ENCODE measurements at regions of chr2 and their contacts with region 1.

Region 1: DNA sequence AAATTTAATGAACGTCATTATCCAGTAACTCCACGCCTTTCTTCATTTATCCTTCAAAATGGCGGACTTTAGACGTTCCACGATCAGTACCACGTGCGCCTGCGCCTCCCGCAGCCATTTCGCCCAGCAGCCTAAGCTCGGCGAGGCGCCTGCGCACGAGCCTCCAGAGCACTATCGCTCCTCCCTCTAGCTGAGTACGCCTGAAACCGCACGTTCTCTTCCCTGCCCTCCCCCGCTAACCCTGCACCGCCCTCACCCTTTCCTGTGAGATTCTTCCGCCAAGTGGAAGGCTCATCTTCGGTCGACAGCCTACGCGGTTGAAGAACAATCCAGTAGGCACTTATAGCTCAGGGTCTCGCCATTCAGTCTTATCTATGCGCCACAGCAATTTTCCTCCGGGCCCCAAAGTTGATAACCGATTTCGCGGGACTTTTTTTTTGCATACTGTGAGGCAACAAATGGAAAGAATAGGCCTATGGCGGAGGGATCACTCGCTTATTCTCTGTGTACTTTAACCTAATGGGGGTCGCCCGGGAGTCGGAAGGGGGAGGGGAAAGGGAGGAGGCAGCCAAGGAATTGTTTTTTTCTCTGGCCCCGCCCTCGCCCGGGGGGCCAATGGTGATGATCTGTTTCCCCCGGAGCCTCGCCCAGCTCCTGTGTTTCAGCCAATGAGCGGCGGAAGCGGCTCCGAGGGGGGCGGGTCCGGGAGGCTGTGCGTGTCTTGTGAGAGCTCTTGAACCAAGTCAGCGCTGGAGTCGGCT is at the start of gene KDM3A:
- DNase-seq: peak; percentile 100
- H3K4me3 Mint-ChIP-seq: peak within 1 kb of the TSS; percentile 93
- H3K27ac Mint-ChIP-seq: peak within 1 kb of the TSS; percentile 98
- H3K4me1 Mint-ChIP-seq: peaks cover 38% of the 10 kb centered on the region
- H3K27me3 Mint-ChIP-seq: peaks cover 6% of the 10 kb centered on the region
- total RNA-seq, gene KDM3A: 74.5 and 78.2 TPM in 2 replicates

Region 2: DNA sequence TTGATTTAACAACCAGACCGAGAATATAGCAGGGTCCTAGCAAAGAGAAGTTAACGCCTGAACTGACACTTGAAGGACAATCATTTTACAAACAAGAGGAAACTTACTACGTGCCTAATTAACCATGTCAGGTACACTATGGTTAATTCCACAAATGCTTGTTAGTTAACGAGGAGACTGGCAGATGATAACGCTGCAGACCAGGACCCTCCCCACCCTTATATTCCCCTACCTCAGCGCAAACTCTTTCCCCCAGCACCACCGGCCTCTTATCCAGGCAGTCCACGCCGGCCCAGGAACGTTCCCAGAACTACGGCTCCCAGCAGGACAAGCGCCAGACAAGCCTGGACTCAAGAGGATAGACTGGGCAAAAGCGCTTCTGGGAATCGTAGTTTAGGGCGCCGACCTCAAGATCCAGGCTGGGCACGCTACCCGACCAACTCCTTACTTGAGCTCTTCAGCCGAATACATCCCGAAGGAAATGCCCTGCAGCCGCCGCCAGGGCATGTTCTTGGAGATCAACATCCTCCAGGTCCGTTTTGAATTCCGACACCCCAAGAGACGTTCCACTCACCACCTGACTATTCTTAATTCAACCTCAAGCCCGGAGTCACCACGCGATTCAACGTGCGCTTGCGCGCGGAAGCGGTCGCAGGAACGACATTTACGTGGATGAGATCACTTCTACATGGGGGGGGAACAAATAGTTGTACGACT is 335.4 kb before region 1 on chr2 and contains the start of gene POLR1A:
- intact Hi-C with region 1: loop called (anchors 5 kb)
- DNase-seq: peak; percentile 85
- H3K4me3 Mint-ChIP-seq: peak within 1 kb of the TSS; percentile 94
- H3K27ac Mint-ChIP-seq: peak within 1 kb of the TSS; percentile 99
- H3K4me1 Mint-ChIP-seq: peaks cover 39% of the 10 kb centered on the region
- H3K27me3 Mint-ChIP-seq: no peaks in the 10 kb centered on the region
- total RNA-seq, gene POLR1A: 54.5 and 61.8 TPM in 2 replicates

Region 3: DNA sequence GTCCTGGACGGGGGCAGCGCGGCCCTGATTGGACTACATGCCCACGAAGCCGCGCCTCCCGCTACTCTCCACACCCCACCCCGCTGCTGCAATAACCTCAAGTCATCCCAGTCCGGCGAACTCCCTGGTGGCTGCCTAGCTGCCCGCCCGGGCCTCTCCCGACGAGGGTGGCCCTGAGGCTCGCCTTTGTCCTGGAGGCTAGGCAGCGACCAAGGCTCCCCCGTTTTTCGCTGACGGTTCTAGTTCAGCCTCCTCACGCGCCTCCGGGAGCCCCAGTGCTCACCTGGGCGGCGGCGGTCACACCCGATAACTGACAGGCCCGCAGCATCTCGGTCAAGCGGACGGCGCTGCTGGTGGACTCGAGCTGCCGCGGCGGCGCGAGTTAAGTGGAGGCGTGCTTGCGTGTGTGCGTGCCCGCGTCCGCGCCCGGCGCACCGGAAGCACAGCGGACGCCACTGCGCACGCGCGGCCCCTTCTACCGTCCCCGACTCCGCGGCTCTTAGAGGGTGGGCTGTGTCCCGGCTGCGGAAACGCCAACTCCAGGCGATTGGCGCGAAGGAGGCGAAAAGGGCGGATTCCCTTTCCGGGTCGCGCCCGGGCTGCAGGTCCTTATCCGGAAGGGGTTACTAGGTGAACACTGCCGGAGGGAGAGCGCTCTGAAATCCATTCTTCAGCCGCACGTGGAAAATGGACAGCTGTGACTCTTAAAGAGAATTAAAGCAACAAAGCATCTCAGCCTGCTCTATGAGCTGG is 245.6 kb before region 1 on chr2 and contains the start of gene IMMT:
- intact Hi-C with region 1: loop called (anchors 2 kb)
- DNase-seq: peak; percentile 91
- H3K4me3 Mint-ChIP-seq: peak within 1 kb of the TSS; percentile 96
- H3K27ac Mint-ChIP-seq: peak within 1 kb of the TSS; percentile 89
- H3K4me1 Mint-ChIP-seq: peaks cover 43% of the 10 kb centered on the region
- H3K27me3 Mint-ChIP-seq: no peaks in the 10 kb centered on the region
- total RNA-seq, gene IMMT: 160 and 180 TPM in 2 replicates

Region 4: GRCh38 chr2:86453836-86454235 is 13.0 kb after region 1 on chr2:
- intact Hi-C with region 1: no loop called
- DNase-seq: no peak
- H3K4me3 Mint-ChIP-seq: no peak overlapping the region
- H3K27ac Mint-ChIP-seq: no peak overlapping the region
- H3K4me1 Mint-ChIP-seq: peaks cover 19% of the 10 kb centered on the region
- H3K27me3 Mint-ChIP-seq: no peaks in the 10 kb centered on the region

Region 5: GRCh38 chr2:86480105-86480504 is 39.3 kb after region 1 on chr2:
- intact Hi-C with region 1: loop called (anchors 5 kb)
- DNase-seq: no peak
- H3K4me3 Mint-ChIP-seq: no peak overlapping the region
- H3K27ac Mint-ChIP-seq: no peak overlapping the region
- H3K4me1 Mint-ChIP-seq: peaks cover 31% of the 10 kb centered on the region
- H3K27me3 Mint-ChIP-seq: no peaks in the 10 kb centered on the region

Region 6: DNA sequence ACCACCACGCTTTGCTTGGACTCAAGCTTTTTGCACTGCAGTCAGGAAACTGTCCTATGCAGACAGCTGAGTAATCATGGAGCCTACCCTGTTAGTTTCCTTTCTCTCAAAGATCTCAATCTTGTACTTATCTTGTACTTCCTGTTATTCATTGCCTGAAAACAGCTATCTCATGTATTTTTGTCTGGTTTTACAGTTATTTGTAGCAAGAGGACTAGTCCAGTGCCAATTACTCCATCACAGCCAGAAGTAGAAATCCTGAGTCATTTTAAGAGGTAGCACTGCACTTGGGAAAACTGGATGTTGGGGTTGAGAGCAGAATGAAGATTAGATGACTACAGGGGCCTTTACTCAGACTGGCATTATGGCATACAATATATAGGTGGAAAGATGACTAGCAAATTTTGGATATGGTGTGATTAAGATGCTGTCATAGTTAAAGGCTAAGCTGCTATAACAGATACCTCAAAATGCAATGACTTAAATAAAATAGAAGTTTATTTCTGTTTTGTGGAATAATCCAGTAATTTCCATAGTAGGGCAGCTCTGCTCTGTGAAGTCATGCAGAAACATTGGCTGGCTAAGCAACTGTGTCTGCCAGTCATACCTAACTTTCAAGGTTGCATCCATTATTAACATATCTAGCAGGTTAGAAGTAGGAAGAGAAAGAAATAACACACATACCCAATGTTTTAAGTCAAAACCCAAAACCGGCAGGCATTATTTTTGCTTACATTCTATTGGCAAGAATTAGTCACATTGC is 143.5 kb after region 1 on chr2:
- intact Hi-C with region 1: loop called (anchors 5 kb)
- DNase-seq: no peak
- H3K4me3 Mint-ChIP-seq: peak overlapping the region; percentile 23
- H3K27ac Mint-ChIP-seq: peak overlapping the region; percentile 76
- H3K4me1 Mint-ChIP-seq: peaks cover 20% of the 10 kb centered on the region
- H3K27me3 Mint-ChIP-seq: peaks cover 1% of the 10 kb centered on the region